IMR-90 (cell line): ENCODE measurements at regions of chr7 and their contacts with region 1.

Region 1: GRCh38 chr7:73501349-73501748 is 20.7 kb downstream of the BAZ1B start:
- DNase-seq: no peak
- ATAC-seq: no peak
- H3K4me3 ChIP-seq: no peak overlapping the region
- H3K27ac ChIP-seq: no peak overlapping the region
- H3K4me1 ChIP-seq: no peaks in the 10 kb centered on the region
- H3K27me3 ChIP-seq: no peaks in the 10 kb centered on the region
- CTCF ChIP-seq: no peak
- POLR2A ChIP-seq: no peak
- RAD21 ChIP-seq: no peak

Region 2: GRCh38 chr7:73446682-73447081 is 54.7 kb before region 1 on chr7:
- CTCF ChIA-PET with region 1: no interaction called
- POLR2A ChIA-PET with region 1: no interaction called
- dilution Hi-C with region 1: no loop called
- in situ Hi-C with region 1: no loop called
- intact Hi-C with region 1: no loop called
- DNase-seq: no peak
- ATAC-seq: no peak
- H3K4me3 ChIP-seq: no peak overlapping the region
- H3K27ac ChIP-seq: no peak overlapping the region
- H3K4me1 ChIP-seq: peaks cover 10% of the 10 kb centered on the region
- H3K27me3 ChIP-seq: no peaks in the 10 kb centered on the region
- CTCF ChIP-seq: no peak
- POLR2A ChIP-seq: no peak
- RAD21 ChIP-seq: no peak

Region 3: DNA sequence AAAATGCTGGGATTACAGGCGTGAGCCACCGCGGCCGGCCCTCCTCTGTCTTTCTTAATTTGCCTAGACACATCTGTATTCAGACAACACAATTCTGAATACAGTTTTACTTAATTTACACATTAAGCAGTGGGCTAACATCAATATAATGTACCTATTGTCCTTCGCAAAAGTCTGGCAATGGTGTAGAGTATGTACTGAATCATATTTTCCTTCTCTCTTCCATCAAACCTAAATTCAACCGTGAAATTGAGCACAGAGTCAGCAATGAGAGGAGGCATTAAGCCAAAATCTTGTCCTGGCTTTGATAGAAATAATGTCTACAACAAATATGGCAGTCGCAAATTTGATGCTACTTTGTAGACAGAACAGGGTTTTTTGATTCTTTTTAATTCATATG is 37.4 kb before region 1 on chr7:
- CTCF ChIA-PET with region 1: no interaction called
- POLR2A ChIA-PET with region 1: no interaction called
- dilution Hi-C with region 1: no loop called
- in situ Hi-C with region 1: loop called (anchors 5 kb)
- intact Hi-C with region 1: loop called (anchors 1 kb)
- DNase-seq: no peak
- ATAC-seq: no peak
- H3K4me3 ChIP-seq: no peak overlapping the region
- H3K27ac ChIP-seq: no peak overlapping the region
- H3K4me1 ChIP-seq: no peaks in the 10 kb centered on the region
- H3K27me3 ChIP-seq: no peaks in the 10 kb centered on the region
- CTCF ChIP-seq: no peak
- POLR2A ChIP-seq: no peak
- RAD21 ChIP-seq: no peak